ENCODE measurements at regions of chr2 and their contacts with region 1.

Region 1: GRCh38 chr2:180077295-180077906 is 70.3 kb upstream of the CWC22 start:
- DNase-seq: peak; percentile 2
- H3K4me3 ChIP-seq: no peak overlapping the region
- H3K27ac ChIP-seq: no peak overlapping the region
- H3K27me3 ChIP-seq: no peaks in the 10 kb centered on the region
- CTCF ChIP-seq: peak; percentile 92

Region 2: DNA sequence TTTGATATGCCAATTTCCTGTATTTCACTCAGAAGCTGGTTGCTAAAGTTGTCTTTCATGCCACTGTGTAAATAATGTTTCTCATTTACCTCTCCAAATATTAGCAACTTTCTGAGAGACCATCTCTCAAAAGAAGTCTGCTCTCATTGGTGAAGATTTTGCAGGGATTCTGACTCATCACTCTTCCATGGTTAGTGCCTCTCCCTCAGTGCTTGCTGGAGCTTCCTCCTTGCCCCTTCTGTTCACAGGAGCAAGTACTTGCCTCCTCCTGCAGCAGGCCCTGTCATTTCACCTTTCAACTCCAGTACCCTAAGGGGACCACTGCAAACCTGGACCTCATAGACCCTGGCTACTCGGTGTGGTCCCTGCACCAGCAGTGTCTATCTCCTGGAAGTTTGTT is 384.8 kb before region 1 on chr2:
- CTCF ChIA-PET with region 1: no interaction called
- POLR2A ChIA-PET with region 1: no interaction called
- DNase-seq: no peak
- H3K4me3 ChIP-seq: no peak overlapping the region
- H3K27ac ChIP-seq: no peak overlapping the region
- H3K27me3 ChIP-seq: no peaks in the 10 kb centered on the region
- CTCF ChIP-seq: no peak

Region 3: DNA sequence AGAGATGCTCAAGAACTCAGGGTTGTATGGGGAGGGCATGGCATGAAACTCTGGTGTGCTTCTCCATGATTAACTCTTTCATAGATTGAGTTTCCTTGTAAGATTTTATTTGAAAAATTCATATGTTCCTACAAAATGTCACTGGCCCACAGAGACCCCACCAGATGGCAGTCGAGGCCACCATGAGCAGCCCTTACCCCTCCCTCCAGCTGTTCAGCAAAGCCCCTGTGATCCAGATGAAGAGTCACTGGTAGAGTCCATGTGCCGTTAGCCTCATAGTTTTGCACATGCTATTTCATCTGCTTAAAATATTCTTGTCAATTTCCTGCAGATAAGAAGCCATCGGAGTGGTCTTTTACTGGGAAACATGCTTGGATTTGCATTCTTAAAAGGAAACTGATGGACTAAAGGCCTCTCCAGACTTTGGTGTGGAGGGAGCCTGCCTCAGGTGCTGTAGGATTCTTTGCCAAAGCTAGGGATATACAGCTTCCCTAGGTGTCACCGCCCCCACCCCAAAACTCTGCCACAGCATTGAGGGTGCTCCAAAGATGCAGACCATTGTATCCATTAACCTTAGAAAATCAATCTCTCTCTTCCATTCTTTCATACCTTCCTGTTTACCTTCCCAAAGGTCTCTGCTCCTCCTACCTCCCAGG is 234.8 kb before region 1 on chr2:
- CTCF ChIA-PET with region 1: interaction called, 11 read pairs
- POLR2A ChIA-PET with region 1: no interaction called
- DNase-seq: no peak
- H3K4me3 ChIP-seq: no peak overlapping the region
- H3K27ac ChIP-seq: no peak overlapping the region
- H3K27me3 ChIP-seq: no peaks in the 10 kb centered on the region
- CTCF ChIP-seq: peak; percentile 55

Region 4: GRCh38 chr2:180000434-180000833 is 77.0 kb before region 1 on chr2:
- CTCF ChIA-PET with region 1: interaction called, 15 read pairs
- POLR2A ChIA-PET with region 1: no interaction called
- DNase-seq: no peak
- H3K4me3 ChIP-seq: no peak overlapping the region
- H3K27ac ChIP-seq: no peak overlapping the region
- H3K27me3 ChIP-seq: no peaks in the 10 kb centered on the region
- CTCF ChIP-seq: no peak

Region 5: GRCh38 chr2:180063494-180064092 is 13.8 kb before region 1 on chr2:
- CTCF ChIA-PET with region 1: interaction called, 11 read pairs
- POLR2A ChIA-PET with region 1: no interaction called
- DNase-seq: no peak
- H3K4me3 ChIP-seq: no peak overlapping the region
- H3K27ac ChIP-seq: no peak overlapping the region
- H3K27me3 ChIP-seq: peaks cover 3% of the 10 kb centered on the region
- CTCF ChIP-seq: no peak

Measured in AG04450 (cell line).